B cell (primary cell): ENCODE measurements at regions of chr1 and their contacts with region 1.

Region 1: GRCh38 chr1:108559215-108560186 is at the start of gene EEIG2:
- DNase-seq: peak; percentile 96
- ATAC-seq: peak; percentile 90
- H3K4me3 ChIP-seq: peak within 1 kb of the TSS; percentile 57 to 85 (median 74)
- H3K4me3 Mint-ChIP-seq: peak within 1 kb of the TSS; percentile 98
- H3K27ac ChIP-seq: peak within 1 kb of the TSS; percentile 75 to 82
- H3K27ac Mint-ChIP-seq: peak within 1 kb of the TSS; percentile 92
- H3K4me1 ChIP-seq: peaks cover 54 to 59% of the 10 kb centered on the region in 2 donors
- H3K4me1 Mint-ChIP-seq: peaks cover 29% of the 10 kb centered on the region
- H3K27me3 ChIP-seq: no peaks in the 10 kb centered on the region
- H3K27me3 Mint-ChIP-seq: no peaks in the 10 kb centered on the region
- CTCF ChIP-seq: peak; percentile 75
- total RNA-seq, gene EEIG2: 11.7 and 13.6 TPM in 2 replicates

Region 2: GRCh38 chr1:108512239-108512981 is 47.1 kb before region 1 on chr1:
- CTCF ChIA-PET with region 1: interaction called, 325 read pairs
- POLR2A ChIA-PET with region 1: no interaction called
- intact Hi-C with region 1: loop called (anchors 1 kb)
- DNase-seq: peak; percentile 68
- ATAC-seq: peak; percentile 65
- H3K4me3 ChIP-seq: no peak overlapping the region
- H3K4me3 Mint-ChIP-seq: no peak overlapping the region
- H3K27ac ChIP-seq: no peak overlapping the region
- H3K27ac Mint-ChIP-seq: no peak overlapping the region
- H3K4me1 ChIP-seq: no peaks in the 10 kb centered on the region
- H3K4me1 Mint-ChIP-seq: no peaks in the 10 kb centered on the region
- H3K27me3 ChIP-seq: peaks cover 0 to 6% (median 0%) of the 10 kb centered on the region in 4 experiments
- H3K27me3 Mint-ChIP-seq: peaks cover 8% of the 10 kb centered on the region
- CTCF ChIP-seq: peak; percentile 97

Region 3: DNA sequence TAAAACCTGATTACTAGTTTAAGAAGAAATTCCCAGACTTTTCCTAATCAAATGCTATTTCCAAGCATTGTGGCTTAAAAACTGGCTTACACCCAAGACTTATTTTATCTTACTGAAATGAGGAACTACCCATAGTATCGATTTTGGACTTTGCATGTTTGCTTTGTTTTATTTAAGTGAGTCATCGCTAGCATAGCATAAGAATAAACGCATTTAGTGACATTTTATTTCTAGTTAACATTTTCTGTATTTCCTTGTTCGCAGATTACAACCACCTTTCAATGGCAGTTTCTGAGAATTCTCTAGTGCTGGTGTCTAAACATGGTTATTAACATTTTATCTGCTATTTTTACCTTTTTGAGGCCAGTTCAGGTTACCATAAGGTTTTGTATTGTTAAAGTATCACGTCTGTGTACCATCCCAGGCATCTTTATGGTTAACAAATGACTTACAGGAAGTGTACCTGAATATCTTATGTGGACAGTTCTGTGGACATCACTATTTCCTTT is 24.9 kb after region 1 on chr1:
- CTCF ChIA-PET with region 1: interaction called, 17 read pairs
- POLR2A ChIA-PET with region 1: no interaction called
- intact Hi-C with region 1: no loop called
- DNase-seq: peak; percentile 35
- ATAC-seq: peak; percentile 39
- H3K4me3 ChIP-seq: no peak overlapping the region
- H3K4me3 Mint-ChIP-seq: peak overlapping the region; percentile 68
- H3K27ac ChIP-seq: no peak overlapping the region
- H3K27ac Mint-ChIP-seq: peak overlapping the region; percentile 74
- H3K4me1 ChIP-seq: peaks cover 8 to 13% of the 10 kb centered on the region in 2 donors
- H3K4me1 Mint-ChIP-seq: peaks cover 33% of the 10 kb centered on the region
- H3K27me3 ChIP-seq: no peaks in the 10 kb centered on the region
- H3K27me3 Mint-ChIP-seq: no peaks in the 10 kb centered on the region
- CTCF ChIP-seq: no peak

Region 4: GRCh38 chr1:108661030-108661620 is 101.6 kb after region 1 on chr1 and contains the start of gene HENMT1:
- CTCF ChIA-PET with region 1: interaction called, 11 read pairs
- POLR2A ChIA-PET with region 1: interaction called, 4 read pairs
- intact Hi-C with region 1: loop called (anchors 1 kb)
- DNase-seq: peak; percentile 94
- ATAC-seq: peak; percentile 84
- H3K4me3 ChIP-seq: peak within 1 kb of the TSS; percentile 2 to 69 (median 59)
- H3K4me3 Mint-ChIP-seq: peak within 1 kb of the TSS; percentile 88
- H3K27ac ChIP-seq: peak within 1 kb of the TSS; percentile 94 to 95
- H3K27ac Mint-ChIP-seq: peak within 1 kb of the TSS; percentile 96
- H3K4me1 ChIP-seq: peaks cover 8 to 10% of the 10 kb centered on the region in 2 donors
- H3K4me1 Mint-ChIP-seq: peaks cover 12% of the 10 kb centered on the region
- H3K27me3 ChIP-seq: no peaks in the 10 kb centered on the region
- H3K27me3 Mint-ChIP-seq: no peaks in the 10 kb centered on the region
- CTCF ChIP-seq: no peak
- total RNA-seq, gene HENMT1: 6.2 and 6.4 TPM in 2 replicates

Region 5: DNA sequence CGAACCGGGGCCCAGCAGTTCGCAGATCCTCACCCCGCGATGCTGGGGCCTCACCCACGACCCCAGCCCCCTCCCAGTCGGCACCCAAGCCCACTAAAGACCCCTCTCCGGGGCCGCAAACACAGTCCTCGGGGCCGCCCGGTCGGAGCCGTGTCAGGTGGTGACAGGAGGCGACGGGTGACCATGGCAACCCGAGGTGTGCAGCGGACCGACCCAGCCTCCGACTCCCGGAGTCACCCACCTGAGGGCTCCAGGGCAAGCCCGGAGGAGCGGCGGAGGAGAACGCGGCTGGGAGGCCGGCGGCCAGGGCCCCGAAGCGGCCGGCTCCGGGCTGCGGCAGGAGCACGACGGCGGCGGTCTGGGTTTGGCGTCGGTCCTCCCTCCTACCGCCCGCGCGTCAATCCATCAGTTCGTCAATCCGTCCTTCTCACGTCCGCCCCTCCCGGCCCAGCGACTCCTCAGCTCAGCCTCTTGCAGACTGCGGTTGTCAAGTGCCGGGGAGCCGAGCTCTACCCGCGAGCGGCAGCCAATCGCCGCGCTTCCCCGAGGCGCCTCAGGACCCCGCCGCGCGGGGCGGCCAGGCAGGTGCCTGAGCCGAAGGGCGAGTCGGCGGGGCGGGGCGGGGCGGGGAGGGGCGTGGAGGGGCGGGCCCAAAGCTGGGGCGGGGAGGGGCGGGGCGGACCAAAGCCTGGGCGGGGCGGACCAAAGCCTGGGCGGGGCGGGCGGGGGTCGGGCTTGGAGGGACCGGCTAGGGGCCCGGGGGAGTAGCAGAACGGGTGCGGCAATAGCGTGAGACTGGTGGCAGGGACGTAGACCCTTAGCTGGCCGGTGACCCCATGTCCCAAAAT is 482.3 kb after region 1 on chr1 and contains the start of gene WDR47:
- CTCF ChIA-PET with region 1: no interaction called
- POLR2A ChIA-PET with region 1: no interaction called
- intact Hi-C with region 1: loop called (anchors 10 kb)
- DNase-seq: peak; percentile 96
- ATAC-seq: peak; percentile 96
- H3K4me3 ChIP-seq: peak within 1 kb of the TSS; percentile 30 to 93 (median 92)
- H3K4me3 Mint-ChIP-seq: peak within 1 kb of the TSS; percentile 97
- H3K27ac ChIP-seq: peak within 1 kb of the TSS; percentile 67 to 75
- H3K27ac Mint-ChIP-seq: peak within 1 kb of the TSS; percentile 95
- H3K4me1 ChIP-seq: peaks cover 7% of the 10 kb centered on the region in 2 donors
- H3K4me1 Mint-ChIP-seq: peaks cover 16% of the 10 kb centered on the region
- H3K27me3 ChIP-seq: no peaks in the 10 kb centered on the region
- H3K27me3 Mint-ChIP-seq: peaks cover 3% of the 10 kb centered on the region
- CTCF ChIP-seq: no peak
- total RNA-seq, gene WDR47: 17.3 and 21.6 TPM in 2 replicates

Region 6: GRCh38 chr1:110425612-110426152 is 1866.2 kb after region 1 on chr1:
- CTCF ChIA-PET with region 1: no interaction called
- POLR2A ChIA-PET with region 1: no interaction called
- intact Hi-C with region 1: no loop called
- DNase-seq: no peak
- ATAC-seq: no peak
- H3K4me3 ChIP-seq: no peak overlapping the region
- H3K4me3 Mint-ChIP-seq: no peak overlapping the region
- H3K27ac ChIP-seq: no peak overlapping the region
- H3K27ac Mint-ChIP-seq: no peak overlapping the region
- H3K4me1 ChIP-seq: no peaks in the 10 kb centered on the region
- H3K4me1 Mint-ChIP-seq: no peaks in the 10 kb centered on the region
- H3K27me3 ChIP-seq: peaks cover 0 to 5% (median 2%) of the 10 kb centered on the region in 4 experiments
- H3K27me3 Mint-ChIP-seq: peaks cover 5% of the 10 kb centered on the region
- CTCF ChIP-seq: no peak